Activated CD4-positive, alpha-beta memory T cell treated with anti-CD3 and anti-CD28 coated beads for 36 hours (primary cell): ENCODE measurements at regions of chr17 and their contacts with region 1.

Region 1: GRCh38 chr17:2401426-2402221 is 764 bp upstream of the MNT start:
- DNase-seq: peak; percentile 100
- H3K4me3 Mint-ChIP-seq: peak overlapping the region; percentile 96
- H3K27ac Mint-ChIP-seq: peak overlapping the region; percentile 91
- H3K4me1 Mint-ChIP-seq: peaks cover 43% of the 10 kb centered on the region
- H3K27me3 Mint-ChIP-seq: no peaks in the 10 kb centered on the region

Region 2: DNA sequence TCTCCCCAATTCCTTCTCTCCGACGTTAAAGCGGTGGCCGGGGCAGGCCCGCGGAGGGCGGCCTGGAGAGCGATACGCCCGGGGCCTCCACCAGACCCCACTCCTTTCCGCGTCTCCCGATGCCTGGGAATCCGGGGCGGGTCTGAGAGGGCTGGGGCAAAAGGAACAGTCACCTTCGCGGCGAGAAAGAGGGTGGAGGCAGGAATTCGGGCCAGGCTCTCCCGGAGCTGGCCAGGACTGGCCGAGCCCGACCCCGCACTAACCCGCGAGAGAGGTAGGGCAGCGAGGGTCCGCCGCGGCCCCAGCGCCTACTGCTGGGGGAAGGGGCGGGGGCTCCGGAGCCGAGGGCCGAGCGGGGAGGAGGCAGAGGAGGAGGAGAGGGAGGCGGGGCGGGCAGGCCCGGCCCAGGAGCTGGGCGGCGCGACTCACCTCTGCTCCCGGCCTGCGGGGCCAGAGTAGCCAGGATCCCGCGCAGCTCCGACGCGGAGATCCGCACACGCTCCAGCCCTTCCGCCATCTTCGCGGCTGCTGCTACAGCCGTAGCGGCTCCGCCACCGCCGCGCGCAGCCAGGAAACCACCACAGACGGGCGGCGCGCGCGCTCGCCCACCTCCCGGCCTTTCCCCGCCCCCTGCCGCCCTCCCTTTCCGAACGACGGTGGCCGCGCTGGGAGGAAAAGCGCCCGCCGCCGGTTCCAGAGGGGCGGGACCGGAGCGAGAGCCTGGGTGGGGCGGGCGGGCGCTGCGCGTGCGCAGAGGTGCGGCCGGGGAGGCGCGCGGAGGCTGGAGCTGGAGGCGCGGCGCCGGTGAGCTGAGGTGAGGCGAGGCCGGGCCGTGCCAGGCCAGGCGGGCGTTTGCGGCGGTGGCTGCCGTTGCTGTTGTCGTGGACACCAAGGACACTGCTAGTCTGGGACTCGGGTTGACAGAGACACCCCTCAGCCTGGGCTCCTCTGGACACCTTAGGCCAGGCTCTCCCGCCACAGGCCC is 98.1 kb before region 1 on chr17 and contains the starts of genes SMG6 and SRR:
- CTCF ChIA-PET with region 1: no interaction called
- POLR2A ChIA-PET with region 1: no interaction called
- intact Hi-C with region 1: loop called (anchors 5 kb)
- DNase-seq: peak; percentile 96
- H3K4me3 Mint-ChIP-seq: peak within 1 kb of the TSS; percentile 90
- H3K27ac Mint-ChIP-seq: peak within 1 kb of the TSS; percentile 75
- H3K4me1 Mint-ChIP-seq: peaks cover 46% of the 10 kb centered on the region
- H3K27me3 Mint-ChIP-seq: no peaks in the 10 kb centered on the region
- total RNA-seq, gene SMG6: 17.2 to 20.3 TPM
- total RNA-seq, gene SRR: 20.0 to 22.2 TPM

Region 3: GRCh38 chr17:2351269-2351668 is 50.4 kb before region 1 on chr17:
- CTCF ChIA-PET with region 1: interaction called, 4 read pairs
- POLR2A ChIA-PET with region 1: no interaction called
- intact Hi-C with region 1: loop called (anchors 5 kb)
- DNase-seq: no peak
- H3K4me3 Mint-ChIP-seq: no peak overlapping the region
- H3K27ac Mint-ChIP-seq: no peak overlapping the region
- H3K4me1 Mint-ChIP-seq: peaks cover 17% of the 10 kb centered on the region
- H3K27me3 Mint-ChIP-seq: no peaks in the 10 kb centered on the region

Region 4: DNA sequence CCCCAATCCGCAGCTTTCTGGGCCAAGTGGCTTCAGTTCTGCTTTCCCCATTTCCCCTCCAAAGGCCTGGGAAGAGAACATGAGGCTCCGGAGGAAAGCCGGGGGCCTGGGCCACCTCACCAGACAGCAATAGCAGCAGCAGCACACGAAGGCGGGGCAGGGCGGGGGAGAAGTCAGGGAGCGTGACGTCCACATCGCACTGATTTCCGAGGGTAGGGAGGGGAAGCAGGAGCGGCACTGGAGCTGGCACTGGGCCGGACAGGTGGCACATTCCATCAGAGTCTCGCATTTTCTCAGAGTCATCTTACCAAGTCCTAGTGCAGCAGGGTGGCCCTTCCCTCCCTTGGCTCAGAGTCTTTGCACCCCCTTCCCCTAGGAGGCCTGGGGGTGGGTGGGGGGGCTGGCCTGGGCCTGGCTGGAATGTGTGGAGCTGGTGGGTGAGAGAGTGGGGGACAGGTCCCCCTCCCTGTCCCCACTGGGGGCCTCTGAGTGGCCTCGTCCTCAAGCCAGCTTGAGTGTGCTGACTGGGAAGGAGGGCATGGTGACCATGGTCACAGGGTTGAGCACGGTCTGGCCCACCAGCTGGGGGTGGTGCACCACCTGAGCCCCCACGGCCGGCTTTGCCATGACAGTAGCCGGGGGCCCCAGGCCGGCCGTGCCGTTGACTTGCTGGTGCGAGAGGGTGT is 15.1 kb before region 1 on chr17:
- CTCF ChIA-PET with region 1: interaction called, 71 read pairs
- POLR2A ChIA-PET with region 1: interaction called, 37 read pairs
- intact Hi-C with region 1: no loop called
- DNase-seq: no peak
- H3K4me3 Mint-ChIP-seq: no peak overlapping the region
- H3K27ac Mint-ChIP-seq: no peak overlapping the region
- H3K4me1 Mint-ChIP-seq: peaks cover 24% of the 10 kb centered on the region
- H3K27me3 Mint-ChIP-seq: no peaks in the 10 kb centered on the region

Region 5: GRCh38 chr17:2449486-2449885 is 47.9 kb after region 1 on chr17:
- CTCF ChIA-PET with region 1: no interaction called
- POLR2A ChIA-PET with region 1: no interaction called
- intact Hi-C with region 1: no loop called
- DNase-seq: no peak
- H3K4me3 Mint-ChIP-seq: no peak overlapping the region
- H3K27ac Mint-ChIP-seq: no peak overlapping the region
- H3K4me1 Mint-ChIP-seq: peaks cover 23% of the 10 kb centered on the region
- H3K27me3 Mint-ChIP-seq: no peaks in the 10 kb centered on the region

Region 6: DNA sequence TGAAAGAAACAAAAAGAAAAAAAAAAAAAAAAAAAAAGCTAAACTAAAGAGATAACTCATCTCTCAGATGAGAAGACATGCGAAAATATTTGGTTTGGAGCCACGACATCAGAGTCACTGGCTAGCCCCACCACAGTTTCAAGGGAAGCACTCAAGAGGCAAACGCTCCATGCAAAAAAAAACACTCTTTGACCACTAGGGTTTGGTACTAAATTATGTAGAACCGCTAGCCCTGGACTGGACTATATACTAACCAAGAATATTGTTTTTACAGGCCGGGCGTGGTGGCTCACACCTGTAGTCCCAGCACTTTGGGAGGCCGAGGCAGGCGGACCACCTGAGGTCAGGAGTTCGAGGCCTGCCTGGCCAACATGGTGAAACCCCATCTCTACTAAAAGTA is 72.7 kb after region 1 on chr17:
- CTCF ChIA-PET with region 1: no interaction called
- POLR2A ChIA-PET with region 1: no interaction called
- intact Hi-C with region 1: no loop called
- DNase-seq: no peak
- H3K4me3 Mint-ChIP-seq: no peak overlapping the region
- H3K27ac Mint-ChIP-seq: no peak overlapping the region
- H3K4me1 Mint-ChIP-seq: no peaks in the 10 kb centered on the region
- H3K27me3 Mint-ChIP-seq: no peaks in the 10 kb centered on the region

Region 7: GRCh38 chr17:2484876-2485275 is 83.3 kb after region 1 on chr17:
- CTCF ChIA-PET with region 1: no interaction called
- POLR2A ChIA-PET with region 1: no interaction called
- intact Hi-C with region 1: no loop called
- DNase-seq: no peak
- H3K4me3 Mint-ChIP-seq: no peak overlapping the region
- H3K27ac Mint-ChIP-seq: no peak overlapping the region
- H3K4me1 Mint-ChIP-seq: peaks cover 39% of the 10 kb centered on the region
- H3K27me3 Mint-ChIP-seq: no peaks in the 10 kb centered on the region

Region 8: DNA sequence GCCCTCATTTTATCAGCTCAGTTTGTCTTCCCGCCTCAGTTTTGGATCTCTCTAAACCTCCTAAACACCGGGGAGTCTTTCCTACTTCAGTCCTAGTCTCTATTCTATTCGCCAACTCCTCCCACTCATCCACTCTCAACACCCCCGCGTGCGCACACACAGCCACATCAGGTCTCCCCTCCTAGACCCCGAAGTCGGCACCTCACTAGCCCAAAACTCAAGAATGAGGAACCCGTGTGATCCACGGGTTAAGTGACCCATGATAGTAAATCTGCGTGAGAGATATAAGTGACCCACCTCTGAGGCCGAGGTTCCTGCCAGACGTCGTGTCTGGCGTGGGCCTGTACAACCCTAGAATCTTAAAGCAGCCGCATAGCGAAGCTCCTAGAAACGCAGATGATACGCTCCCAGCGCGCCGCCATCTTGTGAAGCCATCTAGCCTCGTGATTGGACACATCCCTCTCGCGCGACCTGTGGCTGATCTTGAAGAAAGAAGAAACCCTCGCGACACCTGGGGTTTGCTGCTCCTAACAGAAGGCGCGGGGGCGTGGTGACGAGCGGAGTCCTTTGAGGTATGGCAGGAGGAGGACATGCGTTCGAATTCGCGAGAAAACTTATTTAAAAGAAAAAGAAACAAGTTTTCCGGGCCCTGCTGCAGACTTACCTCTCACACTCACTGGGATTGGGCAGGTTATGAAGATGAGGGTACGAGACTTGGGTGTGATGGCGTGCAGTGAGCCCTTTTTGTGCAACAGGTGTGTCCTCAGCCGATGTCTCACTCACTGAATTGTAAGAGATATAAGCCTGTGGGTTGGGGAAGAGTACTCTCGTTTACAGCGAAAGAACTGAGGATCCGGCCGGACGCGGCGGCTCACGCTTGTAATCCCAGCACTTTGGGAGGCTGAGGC is 110.1 kb after region 1 on chr17 and contains the start of gene METTL16:
- CTCF ChIA-PET with region 1: no interaction called
- POLR2A ChIA-PET with region 1: no interaction called
- intact Hi-C with region 1: loop called (anchors 2 kb)
- DNase-seq: peak; percentile 99
- H3K4me3 Mint-ChIP-seq: no peak within 1 kb of the TSS
- H3K27ac Mint-ChIP-seq: no peak within 1 kb of the TSS
- H3K4me1 Mint-ChIP-seq: peaks cover 11% of the 10 kb centered on the region
- H3K27me3 Mint-ChIP-seq: no peaks in the 10 kb centered on the region
- total RNA-seq, gene METTL16: 44.0 to 44.6 TPM

Region 9: DNA sequence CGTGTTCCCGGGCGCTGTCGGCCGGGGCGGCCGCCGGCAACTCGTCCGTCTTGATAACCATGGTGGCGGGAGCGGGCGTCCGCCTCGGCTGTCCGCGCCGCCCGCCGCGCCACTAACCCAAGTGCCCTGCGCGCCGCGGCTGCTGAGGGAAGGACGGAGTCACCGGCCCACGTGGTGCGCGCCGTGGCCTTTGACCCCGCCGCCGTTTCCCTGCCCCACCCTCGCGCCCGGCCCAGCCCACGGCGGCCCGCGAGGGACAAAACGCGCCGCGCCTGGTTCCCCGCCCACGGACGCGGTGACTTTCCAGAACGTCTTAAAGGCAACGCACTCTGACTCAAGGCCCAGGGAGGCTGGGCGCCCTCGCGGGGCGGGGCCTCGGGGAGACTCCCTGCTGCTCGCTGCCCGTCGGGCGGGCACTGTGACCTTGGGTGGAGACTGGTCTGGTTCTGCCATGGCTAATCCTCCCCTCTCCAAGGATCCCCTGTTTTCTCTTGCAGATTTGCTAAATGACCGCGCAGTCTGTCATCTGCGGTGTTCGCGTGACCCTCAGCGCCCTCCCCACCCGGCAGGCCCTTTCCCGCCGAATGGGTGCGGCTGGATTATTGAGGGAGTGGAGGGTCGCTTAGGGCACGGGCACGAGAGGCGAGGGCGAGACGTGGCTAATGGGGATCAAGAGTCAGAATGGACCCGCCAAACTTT is 310.1 kb after region 1 on chr17 and contains the start of gene CLUH:
- CTCF ChIA-PET with region 1: no interaction called
- POLR2A ChIA-PET with region 1: no interaction called
- intact Hi-C with region 1: loop called (anchors 5 kb)
- DNase-seq: peak; percentile 98
- H3K4me3 Mint-ChIP-seq: peak within 1 kb of the TSS; percentile 88
- H3K27ac Mint-ChIP-seq: peak within 1 kb of the TSS; percentile 82
- H3K4me1 Mint-ChIP-seq: peaks cover 34% of the 10 kb centered on the region
- H3K27me3 Mint-ChIP-seq: no peaks in the 10 kb centered on the region
- total RNA-seq, gene CLUH: 78.4 to 80.4 TPM